ENCODE measurements at regions of chr1 and their contacts with region 1.

Region 1: DNA sequence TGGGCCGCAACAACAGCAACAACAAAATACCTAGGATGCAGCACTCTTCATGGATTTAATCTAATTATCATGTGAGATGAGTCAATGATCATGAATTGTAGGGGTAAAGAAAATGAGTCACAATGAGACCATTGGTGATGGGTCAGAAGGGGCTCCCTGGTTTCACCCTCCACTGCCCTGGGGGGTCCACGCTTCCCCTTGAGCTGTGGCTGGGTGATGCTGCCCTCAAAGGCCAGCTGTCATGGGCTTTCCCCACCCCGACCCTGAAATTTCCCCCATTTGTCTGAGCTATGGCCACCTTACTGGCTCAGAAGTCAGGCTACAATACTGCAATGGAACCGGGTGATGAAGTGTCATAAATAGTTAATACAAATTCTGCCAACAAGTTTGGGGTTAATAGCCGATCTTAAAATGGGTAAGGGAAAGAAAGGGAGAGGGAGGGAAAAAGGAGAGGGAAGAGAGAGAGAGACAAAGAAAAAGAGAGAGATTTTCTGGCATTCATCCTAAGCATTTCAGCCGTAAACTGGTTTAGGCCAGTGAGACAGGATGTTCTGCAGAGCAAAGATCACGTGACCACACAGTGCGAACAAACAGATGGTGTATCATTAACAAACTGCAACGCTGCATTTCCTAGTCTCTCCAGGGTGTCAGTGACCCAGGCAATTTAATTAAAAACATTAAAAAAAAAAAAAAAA is 143.4 kb upstream of the ERRFI1 start:
- DNase-seq: peak; percentile 66
- H3K4me3 Mint-ChIP-seq: peak overlapping the region; percentile 44
- H3K27ac Mint-ChIP-seq: peak overlapping the region; percentile 91
- H3K4me1 Mint-ChIP-seq: peaks cover 38% of the 10 kb centered on the region
- H3K27me3 Mint-ChIP-seq: no peaks in the 10 kb centered on the region

Region 2: DNA sequence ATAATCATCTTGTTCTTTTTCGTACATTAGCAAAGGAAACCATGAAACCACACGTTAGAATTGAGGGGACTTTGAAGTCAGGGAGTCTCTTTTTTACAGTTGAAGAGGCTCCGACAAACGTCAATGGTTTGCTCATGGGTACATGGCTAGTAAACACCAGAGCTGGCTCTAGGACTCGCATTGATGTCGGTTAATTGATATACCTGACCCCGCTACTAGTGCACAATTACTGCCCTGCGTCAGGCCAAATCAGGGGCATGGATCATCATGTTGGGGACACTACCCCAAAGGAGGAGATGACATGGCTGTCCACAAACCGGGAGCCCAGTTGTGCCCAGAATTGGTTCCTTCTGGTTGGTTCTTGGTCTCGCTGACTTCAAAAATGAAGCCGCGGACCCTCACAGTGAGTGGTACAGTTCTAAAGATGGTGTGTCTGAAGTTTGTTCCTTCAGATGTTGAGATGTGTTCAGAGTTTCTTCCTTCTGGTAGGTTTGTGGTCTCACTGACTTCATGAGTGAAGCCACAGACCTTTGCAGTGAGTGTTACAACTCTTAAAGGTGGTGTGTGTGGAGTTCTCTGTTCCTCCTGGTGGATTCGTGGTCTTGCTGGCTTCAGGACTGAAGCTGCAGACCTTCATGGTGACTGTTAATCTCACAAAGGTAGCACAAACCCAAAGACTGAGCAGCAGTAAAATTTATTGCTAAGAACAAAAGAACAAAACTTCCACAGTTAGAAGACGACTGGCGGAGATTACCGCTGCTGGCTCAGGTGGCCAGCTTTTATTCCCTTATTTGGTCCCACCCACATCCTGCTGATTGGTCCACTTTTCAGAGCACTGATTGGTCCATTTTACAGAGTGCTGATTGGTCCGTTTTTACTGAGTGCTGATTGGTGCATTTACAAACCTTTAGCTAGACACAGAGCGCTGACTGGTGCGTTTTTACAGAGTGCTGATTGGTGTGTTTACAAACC is 16.5 kb before region 1 on chr1:
- CTCF ChIA-PET with region 1: interaction called, 6 read pairs
- POLR2A ChIA-PET with region 1: no interaction called
- intact Hi-C with region 1: loop called (anchors 2 kb)
- DNase-seq: peak; percentile 72
- H3K4me3 Mint-ChIP-seq: peak overlapping the region; percentile 69
- H3K27ac Mint-ChIP-seq: peak overlapping the region; percentile 94
- H3K4me1 Mint-ChIP-seq: peaks cover 42% of the 10 kb centered on the region
- H3K27me3 Mint-ChIP-seq: no peaks in the 10 kb centered on the region

Region 3: GRCh38 chr1:8182034-8182761 is 12.7 kb after region 1 on chr1:
- CTCF ChIA-PET with region 1: interaction called, 3 read pairs
- POLR2A ChIA-PET with region 1: no interaction called
- intact Hi-C with region 1: loop called (anchors 1 kb)
- DNase-seq: peak; percentile 58
- H3K4me3 Mint-ChIP-seq: peak overlapping the region; percentile 24
- H3K27ac Mint-ChIP-seq: peak overlapping the region; percentile 69
- H3K4me1 Mint-ChIP-seq: peaks cover 22% of the 10 kb centered on the region
- H3K27me3 Mint-ChIP-seq: no peaks in the 10 kb centered on the region